GM12878 (cell line): ENCODE measurements at regions of chrX and their contacts with region 1.

Region 1: DNA sequence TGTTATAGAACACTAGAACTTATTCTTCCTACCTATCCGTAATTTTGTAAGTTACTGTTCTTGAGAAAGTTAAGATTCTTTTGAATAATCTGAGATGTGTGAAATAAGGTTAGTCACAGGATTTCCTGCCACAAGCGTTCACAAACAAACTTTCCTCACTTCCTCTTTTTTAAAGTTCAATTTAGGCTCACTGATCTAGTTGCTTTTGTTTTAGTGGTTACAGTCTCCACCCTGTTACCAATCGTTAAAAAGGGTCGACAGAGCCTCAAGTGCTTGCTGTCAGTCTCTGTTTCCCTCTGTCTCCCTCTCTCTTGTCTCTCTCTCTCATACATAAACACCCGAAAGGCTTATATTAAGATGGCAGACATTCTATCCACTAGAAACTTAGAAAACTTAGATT is 35.9 kb upstream of the STK26 start:
- DNase-seq: peak; percentile 73
- ATAC-seq: peak; percentile 99
- H3K4me3 ChIP-seq: no peak overlapping the region
- H3K27ac ChIP-seq: peak overlapping the region; percentile 86
- H3K4me1 ChIP-seq: peaks cover 5% of the 10 kb centered on the region
- H3K27me3 ChIP-seq: no peaks in the 10 kb centered on the region
- CTCF ChIP-seq: no peak
- EP300 ChIP-seq: peak; percentile 57 to 88; a peak in 3 of 4 replicates
- POLR2A ChIP-seq: no peak
- RAD21 ChIP-seq: no peak

Region 2: DNA sequence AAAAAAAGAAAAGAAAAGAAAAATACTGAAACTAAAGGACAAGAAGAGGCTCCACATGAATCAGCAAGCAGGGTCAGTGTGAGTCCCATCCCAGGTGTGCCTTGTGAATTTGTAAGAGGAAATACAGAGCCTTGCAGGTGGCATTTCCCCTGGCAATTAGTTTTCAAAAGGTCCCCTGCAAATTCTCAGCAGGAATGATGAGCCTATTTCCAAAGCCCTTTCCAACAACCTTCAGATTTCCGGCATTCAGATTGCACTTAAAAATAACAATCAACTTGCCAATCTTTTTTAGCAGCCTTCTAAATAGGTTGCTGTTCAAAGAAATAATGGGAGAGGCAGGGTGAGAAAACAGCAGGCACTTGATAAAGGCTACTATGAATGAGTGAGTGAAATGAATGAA is 509.8 kb before region 1 on chrX:
- CTCF ChIA-PET with region 1: no interaction called
- POLR2A ChIA-PET with region 1: no interaction called
- RAD21 ChIA-PET with region 1: no interaction called
- SMC1A ChIA-PET with region 1: no interaction called
- in situ Hi-C with region 1: no loop called
- intact Hi-C with region 1: no loop called
- DNase-seq: no peak
- ATAC-seq: no peak
- H3K4me3 ChIP-seq: no peak overlapping the region
- H3K27ac ChIP-seq: no peak overlapping the region
- H3K4me1 ChIP-seq: no peaks in the 10 kb centered on the region
- H3K27me3 ChIP-seq: no peaks in the 10 kb centered on the region
- CTCF ChIP-seq: no peak
- EP300 ChIP-seq: no peak
- POLR2A ChIP-seq: no peak
- RAD21 ChIP-seq: no peak

Region 3: DNA sequence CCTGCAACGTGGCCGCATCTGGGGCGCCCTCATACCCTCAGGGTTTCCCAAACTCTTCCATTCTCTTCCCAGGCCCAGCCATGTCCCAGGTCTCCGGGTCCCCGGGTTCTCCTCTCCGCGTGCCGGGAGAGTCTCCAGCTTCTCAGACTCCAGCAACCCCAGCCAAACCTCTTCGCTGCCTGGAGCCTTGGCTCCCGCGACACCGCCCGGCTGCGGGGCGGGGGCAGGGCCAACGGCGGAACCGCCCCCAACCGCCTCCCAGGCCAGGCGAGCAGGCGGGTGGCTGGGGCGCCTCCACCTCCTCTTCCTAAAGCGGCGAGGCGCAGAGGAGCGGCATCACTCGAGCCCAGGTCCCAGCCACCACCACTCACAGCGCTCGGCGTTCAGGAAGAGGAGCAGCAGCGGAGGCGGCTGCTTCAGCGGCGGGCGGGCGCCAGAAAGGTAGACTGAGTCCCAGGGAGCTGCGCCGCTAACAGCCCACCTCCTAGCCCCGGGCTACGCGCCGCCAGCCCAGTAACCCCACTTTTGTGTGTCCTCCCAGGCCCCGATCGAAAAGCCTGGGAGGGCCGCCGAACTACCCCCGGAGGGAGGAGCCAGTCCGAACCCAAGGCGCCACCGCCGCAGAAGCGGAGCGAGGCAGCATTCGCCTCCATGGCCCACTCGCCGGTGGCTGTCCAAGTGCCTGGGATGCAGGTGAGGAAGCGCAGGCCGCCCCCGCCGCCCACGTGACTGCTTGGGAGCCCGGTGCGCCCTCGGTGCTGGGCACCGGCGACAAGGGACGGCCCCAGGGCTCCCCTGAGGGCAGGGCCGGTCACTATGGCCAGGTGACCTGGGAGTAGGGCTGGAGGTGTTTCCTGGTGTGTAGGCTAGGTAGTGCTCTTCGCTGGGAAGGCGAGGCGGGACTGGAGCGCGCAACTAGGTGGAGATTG is 36.0 kb after region 1 on chrX and contains the start of gene STK26:
- CTCF ChIA-PET with region 1: interaction called, 3 read pairs
- POLR2A ChIA-PET with region 1: interaction called, 4 read pairs
- RAD21 ChIA-PET with region 1: interaction called, 4 read pairs
- SMC1A ChIA-PET with region 1: interaction called, 9 read pairs
- in situ Hi-C with region 1: no loop called
- intact Hi-C with region 1: loop called (anchors 1 kb)
- DNase-seq: no peak
- ATAC-seq: peak; percentile 86
- H3K4me3 ChIP-seq: peak within 1 kb of the TSS; percentile 71
- H3K27ac ChIP-seq: peak within 1 kb of the TSS; percentile 87
- H3K4me1 ChIP-seq: no peaks in the 10 kb centered on the region
- H3K27me3 ChIP-seq: no peaks in the 10 kb centered on the region
- CTCF ChIP-seq: no peak
- EP300 ChIP-seq: no peak
- POLR2A ChIP-seq: peak; percentile 97
- RAD21 ChIP-seq: no peak
- polyA plus RNA-seq, gene STK26: 30.4 to 34.9 TPM

Region 4: DNA sequence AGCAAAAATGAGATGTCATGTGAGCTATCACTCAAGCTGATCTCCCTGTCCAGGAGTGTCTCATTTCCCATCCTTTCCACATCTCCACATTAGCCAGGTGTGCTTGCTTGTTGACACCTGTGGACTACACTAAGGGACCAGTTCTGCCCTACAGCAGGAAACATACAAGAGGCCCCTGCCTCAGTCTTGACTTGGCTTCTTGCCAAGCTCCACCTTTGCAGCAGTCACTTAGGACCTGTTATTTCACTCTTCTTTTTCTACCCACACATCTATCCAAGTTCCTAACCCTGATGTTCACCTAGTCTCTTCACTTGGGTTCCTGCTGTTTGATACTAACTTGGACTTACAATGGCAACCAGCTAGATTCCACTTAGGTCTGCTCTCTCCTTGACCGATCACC is 127.4 kb after region 1 on chrX:
- CTCF ChIA-PET with region 1: no interaction called
- POLR2A ChIA-PET with region 1: no interaction called
- RAD21 ChIA-PET with region 1: no interaction called
- SMC1A ChIA-PET with region 1: no interaction called
- in situ Hi-C with region 1: no loop called
- intact Hi-C with region 1: no loop called
- DNase-seq: no peak
- ATAC-seq: no peak
- H3K4me3 ChIP-seq: no peak overlapping the region
- H3K27ac ChIP-seq: no peak overlapping the region
- H3K4me1 ChIP-seq: no peaks in the 10 kb centered on the region
- H3K27me3 ChIP-seq: no peaks in the 10 kb centered on the region
- CTCF ChIP-seq: no peak
- EP300 ChIP-seq: no peak
- POLR2A ChIP-seq: no peak
- RAD21 ChIP-seq: no peak